ENCODE measurements at regions of chr3 and their contacts with region 1.

Region 1: DNA sequence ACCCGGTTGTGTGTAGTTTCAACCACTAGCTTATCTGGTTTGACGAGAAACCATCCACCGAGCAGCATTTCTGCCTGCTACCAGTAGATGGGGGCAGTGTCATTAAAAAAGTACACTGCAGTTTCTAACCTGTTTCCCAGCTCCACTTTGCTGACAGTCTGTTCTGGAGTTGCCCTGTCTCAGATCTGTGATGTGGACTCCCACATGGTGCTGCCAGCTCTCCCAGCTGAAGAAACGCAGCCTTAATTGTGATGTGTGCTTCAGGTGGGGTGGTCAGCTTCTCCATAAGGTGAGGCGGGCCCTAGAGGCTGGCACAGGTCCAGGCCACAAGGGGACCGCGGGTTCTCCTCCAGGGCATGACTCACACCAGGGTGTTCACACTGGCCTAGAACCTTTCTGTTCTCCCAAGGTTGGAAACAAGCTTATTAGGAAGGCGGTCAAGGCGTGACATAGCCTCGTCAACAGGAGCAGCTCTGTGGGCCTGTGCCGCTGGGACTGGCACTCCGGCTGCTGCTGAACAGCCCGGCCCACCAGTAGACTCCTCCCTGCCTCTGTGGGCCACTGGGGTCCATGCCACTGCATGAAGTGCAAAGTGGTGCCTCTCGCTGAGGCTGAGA is 2.9 kb upstream of the FAM43A start:
- DNase-seq: peak; percentile 79
- ATAC-seq: peak; percentile 47
- H3K4me3 Mint-ChIP-seq: no peak overlapping the region
- H3K27ac Mint-ChIP-seq: no peak overlapping the region
- H3K4me1 Mint-ChIP-seq: peaks cover 10% of the 10 kb centered on the region
- H3K27me3 Mint-ChIP-seq: peaks cover 46% of the 10 kb centered on the region
- CTCF ChIP-seq: peak; percentile 62

Region 2: DNA sequence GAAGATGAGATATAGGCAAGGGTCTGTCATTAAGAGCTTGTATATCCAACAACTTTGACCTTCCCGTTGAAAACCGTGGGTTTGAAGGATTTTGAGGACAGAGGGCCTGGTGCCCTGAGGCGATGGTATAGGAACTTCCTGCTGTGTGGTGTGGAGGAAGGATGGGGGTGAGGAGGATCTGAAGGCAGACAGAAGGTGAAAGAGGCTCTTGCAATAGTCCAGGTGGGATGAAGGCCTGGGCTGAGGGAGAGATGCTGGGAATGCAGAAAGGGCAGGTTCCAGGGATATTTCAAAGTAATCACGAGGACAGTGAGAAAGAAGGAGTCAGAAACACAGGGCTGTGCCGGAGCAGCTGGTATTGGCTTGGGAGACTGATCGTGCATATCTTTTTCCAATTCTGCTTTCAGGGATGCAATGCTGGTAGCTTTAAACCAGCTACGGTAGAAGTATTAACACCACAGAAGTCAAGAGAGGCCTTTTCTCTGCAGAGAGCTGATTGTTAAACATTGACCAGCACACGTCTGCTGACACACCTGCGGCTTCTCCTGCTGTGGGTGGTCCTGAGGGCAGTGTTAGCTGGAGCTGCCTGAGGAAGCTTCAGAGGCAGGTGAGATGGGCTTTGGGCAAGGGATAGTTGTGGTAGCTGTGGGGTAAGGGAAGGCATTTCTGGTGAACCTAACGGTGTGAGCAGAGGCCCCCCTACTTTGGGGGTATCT is 23.8 kb after region 1 on chr3:
- CTCF ChIA-PET with region 1: interaction called, 16 read pairs
- POLR2A ChIA-PET with region 1: interaction called, 4 read pairs
- DNase-seq: no peak
- ATAC-seq: peak; percentile 67
- H3K4me3 Mint-ChIP-seq: no peak overlapping the region; the same call in 1 of the 2 replicates
- H3K27ac Mint-ChIP-seq: peak overlapping the region; percentile 79; the same call in 1 of the 2 replicates
- H3K4me1 Mint-ChIP-seq: peaks cover 19% of the 10 kb centered on the region
- H3K27me3 Mint-ChIP-seq: no peaks in the 10 kb centered on the region
- CTCF ChIP-seq: no peak

Region 3: DNA sequence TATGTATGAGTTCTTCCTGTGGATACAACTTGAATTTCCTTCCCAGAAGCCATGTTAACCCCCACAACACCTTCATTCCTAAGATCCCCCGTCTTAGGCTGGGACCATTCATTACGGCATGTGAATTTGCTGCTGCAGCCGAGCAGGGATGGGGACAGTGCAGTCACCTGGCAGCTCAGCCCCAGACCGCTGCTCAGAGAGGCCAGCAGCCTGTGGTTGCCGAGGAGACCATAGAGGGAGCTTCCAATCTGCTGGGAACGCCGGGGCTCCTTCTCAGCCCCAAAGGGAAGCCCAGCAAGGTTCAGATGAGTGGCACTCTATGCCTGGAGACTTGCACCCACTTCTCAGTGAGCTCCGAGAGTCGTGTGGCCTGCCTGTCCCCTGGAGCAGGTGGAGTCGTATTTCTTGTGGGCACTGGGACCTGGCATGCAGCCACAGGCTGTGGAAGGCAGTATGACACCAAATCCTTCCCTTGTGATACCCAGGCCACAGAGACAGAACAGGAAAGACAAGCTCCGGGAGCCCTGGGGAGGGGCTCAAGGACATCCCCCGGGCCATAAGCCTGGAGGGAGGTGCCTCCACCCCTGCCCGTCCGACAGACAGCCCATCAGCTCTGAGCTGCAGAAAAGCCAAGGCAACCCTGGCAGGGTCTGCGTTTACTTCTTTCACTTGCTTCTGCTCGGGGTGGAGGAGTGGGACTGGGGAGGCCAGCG is 170.2 kb after region 1 on chr3:
- CTCF ChIA-PET with region 1: interaction called, 16 read pairs
- POLR2A ChIA-PET with region 1: no interaction called
- DNase-seq: no peak
- ATAC-seq: peak; percentile 56; the same call in 1 of the 2 replicates
- H3K4me3 Mint-ChIP-seq: no peak overlapping the region
- H3K27ac Mint-ChIP-seq: no peak overlapping the region
- H3K4me1 Mint-ChIP-seq: peaks cover 13% of the 10 kb centered on the region
- H3K27me3 Mint-ChIP-seq: no peaks in the 10 kb centered on the region
- CTCF ChIP-seq: no peak

Region 4: DNA sequence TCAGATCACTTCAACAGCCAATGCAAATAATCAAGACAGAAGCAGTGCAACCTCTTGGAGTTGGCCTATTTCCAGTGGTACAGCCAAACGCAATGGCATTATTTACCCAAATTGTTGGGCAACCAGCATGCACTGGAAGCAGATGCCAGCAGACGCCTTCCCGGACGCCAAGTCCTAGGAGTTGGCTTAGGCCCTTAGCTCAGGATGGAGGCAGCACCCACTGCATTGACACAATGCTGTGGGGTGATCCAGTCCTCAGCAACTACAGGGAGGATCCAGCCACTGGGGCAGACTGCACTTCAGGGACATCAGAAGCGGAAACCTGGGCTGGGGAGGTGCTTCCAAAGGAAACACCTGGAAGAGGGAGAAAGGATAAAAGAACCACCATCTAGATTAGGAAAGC is 293.2 kb after region 1 on chr3:
- CTCF ChIA-PET with region 1: interaction called, 10 read pairs
- POLR2A ChIA-PET with region 1: no interaction called
- DNase-seq: no peak
- ATAC-seq: no peak
- H3K4me3 Mint-ChIP-seq: no peak overlapping the region
- H3K27ac Mint-ChIP-seq: no peak overlapping the region
- H3K4me1 Mint-ChIP-seq: no peaks in the 10 kb centered on the region
- H3K27me3 Mint-ChIP-seq: no peaks in the 10 kb centered on the region
- CTCF ChIP-seq: no peak

Region 5: GRCh38 chr3:195035345-195036190 is 352.8 kb after region 1 on chr3:
- CTCF ChIA-PET with region 1: interaction called, 10 read pairs
- POLR2A ChIA-PET with region 1: no interaction called
- DNase-seq: peak; percentile 73
- ATAC-seq: peak; percentile 74
- H3K4me3 Mint-ChIP-seq: no peak overlapping the region; the same call in 1 of the 2 replicates
- H3K27ac Mint-ChIP-seq: no peak overlapping the region
- H3K4me1 Mint-ChIP-seq: peaks cover 59% of the 10 kb centered on the region
- H3K27me3 Mint-ChIP-seq: peaks cover 15% of the 10 kb centered on the region
- CTCF ChIP-seq: no peak

Region 6: GRCh38 chr3:195271116-195271858 is 588.5 kb after region 1 on chr3 and contains the start of gene XXYLT1:
- CTCF ChIA-PET with region 1: interaction called, 24 read pairs
- POLR2A ChIA-PET with region 1: interaction called, 8 read pairs
- DNase-seq: peak; percentile 94
- ATAC-seq: peak; percentile 92
- H3K4me3 Mint-ChIP-seq: peak within 1 kb of the TSS; percentile 84
- H3K27ac Mint-ChIP-seq: no peak within 1 kb of the TSS; the same call in 1 of the 2 replicates
- H3K4me1 Mint-ChIP-seq: peaks cover 24% of the 10 kb centered on the region
- H3K27me3 Mint-ChIP-seq: no peaks in the 10 kb centered on the region
- CTCF ChIP-seq: peak; percentile 84
- total RNA-seq, gene XXYLT1: 21.4 to 23.4 TPM (median 22.5 TPM) in 3 replicates